Adrenal gland (tissue), 19 donors: ENCODE measurements at regions of chr7 and their contacts with region 1.

Region 1: DNA sequence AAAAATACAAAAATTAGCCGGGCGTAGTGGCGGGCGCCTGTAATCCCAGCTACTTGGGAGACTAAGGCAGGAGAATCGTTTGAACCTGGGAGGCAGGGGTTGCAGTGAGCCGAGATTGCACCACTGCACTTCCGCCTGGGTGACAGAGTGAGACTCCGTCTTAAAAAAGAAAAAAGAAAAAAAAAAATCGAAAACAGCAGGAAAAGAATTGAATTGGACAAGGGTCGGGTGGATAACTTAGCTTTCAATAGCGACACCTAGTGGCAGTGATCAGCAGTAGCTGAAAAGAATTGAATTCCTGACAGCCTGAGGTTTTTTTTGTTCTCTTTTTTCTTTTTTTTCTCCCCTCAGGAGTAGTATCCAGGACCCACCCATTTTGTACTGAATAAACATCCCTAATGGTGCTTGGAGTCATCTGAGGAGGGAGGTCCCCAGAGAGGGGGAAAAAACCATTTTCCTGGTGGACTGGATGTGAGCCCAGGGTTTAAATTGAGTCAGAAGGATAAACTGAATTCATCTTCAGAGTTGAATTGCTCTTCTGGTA is 55.1 kb downstream of the CYCS start:
- DNase-seq: peak; percentile 25 to 67 (median 50)
- H3K4me3 ChIP-seq: peak overlapping the region in 1 of 4 donors; percentile 35
- H3K27ac ChIP-seq: no peak overlapping the region
- H3K4me1 ChIP-seq: peaks cover 0 to 4% of the 10 kb centered on the region in 2 donors
- H3K27me3 ChIP-seq: no peaks in the 10 kb centered on the region
- CTCF ChIP-seq: peak; percentile 65 to 95 (median 88)
- POLR2A ChIP-seq: no peak

Region 2: GRCh38 chr7:24819916-24820689 is 249.9 kb before region 1 on chr7:
- intact Hi-C with region 1: loop called (anchors 5 to 10 kb)
- DNase-seq: peak; percentile 73 to 90 (median 86)
- H3K4me3 ChIP-seq: no peak overlapping the region
- H3K27ac ChIP-seq: no peak overlapping the region
- H3K4me1 ChIP-seq: peaks cover 4 to 7% of the 10 kb centered on the region in 2 donors
- H3K27me3 ChIP-seq: no peaks in the 10 kb centered on the region
- CTCF ChIP-seq: peak; percentile 80 to 91 (median 82)
- POLR2A ChIP-seq: no peak

Region 3: DNA sequence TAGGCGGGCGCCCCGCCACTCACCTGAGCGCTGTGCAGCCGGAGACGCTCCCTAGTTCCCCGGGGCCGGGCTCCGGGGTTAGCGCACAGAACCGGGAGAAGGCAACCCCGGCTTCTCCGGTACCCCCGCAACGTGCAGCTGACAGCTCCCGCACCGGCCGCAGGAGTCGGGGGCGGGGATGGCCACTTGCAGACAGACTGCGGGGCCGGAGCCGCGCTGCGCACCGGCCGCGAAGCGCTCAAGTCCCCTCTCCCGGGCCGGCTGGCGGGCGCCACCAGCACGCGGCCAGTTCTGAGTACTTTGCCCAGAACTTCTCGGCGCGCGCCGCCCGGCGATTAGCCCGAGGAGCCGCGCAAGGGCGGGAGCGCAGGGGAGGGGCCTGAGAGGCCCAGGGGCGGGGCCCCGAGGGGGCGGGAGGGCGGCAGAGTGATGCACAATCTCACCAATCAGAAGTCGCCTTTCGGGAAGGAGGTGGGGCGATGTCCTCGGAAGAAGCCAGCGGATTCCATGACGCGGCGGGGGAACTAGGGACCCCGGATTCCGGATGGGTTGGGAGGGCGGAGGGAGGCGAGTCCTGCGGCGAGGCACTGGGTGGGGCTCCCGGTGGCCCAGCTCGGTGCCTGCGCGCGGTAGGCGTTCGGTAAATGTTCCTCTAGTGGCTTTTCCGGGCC is 90.0 kb before region 1 on chr7 and contains the start of gene OSBPL3:
- intact Hi-C with region 1: loop called in 1 of 2 experiments (anchors 10 kb)
- DNase-seq: peak; percentile 87 to 95 (median 94)
- H3K4me3 ChIP-seq: peak within 1 kb of the TSS in 3 of 4 donors; percentile 15 to 54 (median 21)
- H3K27ac ChIP-seq: peak within 1 kb of the TSS in 4 of 5 donors; percentile 33 to 86 (median 51)
- H3K4me1 ChIP-seq: peaks cover 7 to 26% of the 10 kb centered on the region in 2 donors
- H3K27me3 ChIP-seq: no peaks in the 10 kb centered on the region
- CTCF ChIP-seq: no peak
- POLR2A ChIP-seq: peak in 1 of 2 donors; percentile 60
- total RNA-seq, gene OSBPL3: 1.1 to 8.4 (median 3.4) TPM

Region 4: DNA sequence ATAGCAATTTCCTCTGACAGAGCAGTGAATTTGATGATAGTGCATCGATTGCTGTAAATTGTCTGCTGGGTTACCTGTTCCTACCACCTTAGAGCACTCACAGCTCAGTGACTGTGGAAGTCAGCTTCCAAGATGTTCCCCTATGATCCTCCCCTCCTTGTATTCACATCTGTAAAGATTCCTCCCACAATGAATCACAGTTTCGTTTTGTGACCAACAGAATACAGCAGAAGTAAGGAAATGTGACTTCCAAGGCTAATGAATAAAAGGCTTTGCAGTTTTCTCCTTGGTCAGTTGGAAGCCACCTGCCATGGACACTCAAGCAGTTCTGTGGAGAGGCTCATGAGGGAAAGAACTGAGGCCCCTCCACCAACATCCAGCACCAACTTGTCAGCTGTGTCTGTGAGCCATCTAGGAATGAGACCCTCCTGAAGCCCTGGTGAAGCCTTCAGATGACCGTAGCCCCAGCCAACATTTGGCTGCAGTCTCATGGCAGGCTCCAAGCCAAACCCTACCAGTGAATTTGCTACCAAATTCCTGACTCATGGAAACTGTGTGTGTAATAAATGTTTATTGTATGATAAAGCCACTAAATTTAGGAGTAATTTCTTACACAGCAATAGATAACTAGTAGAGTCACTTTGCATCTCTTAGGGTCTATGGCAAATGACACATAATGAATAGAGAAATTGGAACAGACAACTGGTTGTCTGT is 467.8 kb after region 1 on chr7:
- intact Hi-C with region 1: no loop called
- DNase-seq: peak in 1 of 7 donors; percentile 25
- H3K4me3 ChIP-seq: no peak overlapping the region
- H3K27ac ChIP-seq: no peak overlapping the region
- H3K4me1 ChIP-seq: peaks cover 7 to 11% of the 10 kb centered on the region in 2 donors
- H3K27me3 ChIP-seq: no peaks in the 10 kb centered on the region
- CTCF ChIP-seq: no peak
- POLR2A ChIP-seq: no peak